ENCODE measurements at regions of chr6 and their contacts with region 1.

Region 1: GRCh38 chr6:142946181-142946923 is 1.4 kb upstream of the HIVEP2 start:
- DNase-seq: no peak
- ATAC-seq: peak; percentile 51
- H3K4me3 ChIP-seq: peak overlapping the region; percentile 94
- H3K27ac ChIP-seq: peak overlapping the region; percentile 98
- H3K4me1 ChIP-seq: peaks cover 9% of the 10 kb centered on the region; the same call in 1 of the 2 replicates
- H3K27me3 ChIP-seq: no peaks in the 10 kb centered on the region
- CTCF ChIP-seq: no peak
- EP300 ChIP-seq: no peak; a peak in 1 of 4 replicates
- POLR2A ChIP-seq: peak; percentile 52; the same call in 1 of the 2 replicates
- RAD21 ChIP-seq: no peak

Region 2: DNA sequence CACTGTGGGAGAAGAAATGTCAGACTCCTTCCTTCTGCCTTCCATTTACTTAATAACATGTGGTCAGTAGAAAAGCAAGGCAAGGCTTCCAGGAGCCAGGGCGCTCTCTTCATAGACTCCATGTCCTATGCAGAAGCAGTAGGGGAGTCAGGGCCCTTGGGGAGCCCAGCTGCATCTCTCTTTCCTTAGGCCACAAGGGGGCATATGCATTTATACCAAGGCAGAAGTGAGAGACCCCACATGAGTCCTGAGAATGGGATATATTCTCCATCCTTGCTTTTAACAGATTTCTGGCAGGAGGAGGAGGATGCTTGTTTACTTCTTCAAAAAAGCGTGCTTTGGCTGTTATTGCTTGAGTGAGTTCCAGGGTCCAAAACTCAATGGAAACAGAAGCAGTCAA is 199.8 kb before region 1 on chr6:
- CTCF ChIA-PET with region 1: interaction called, 7 read pairs
- POLR2A ChIA-PET with region 1: no interaction called
- RAD21 ChIA-PET with region 1: interaction called, 3 read pairs
- SMC1A ChIA-PET with region 1: no interaction called
- in situ Hi-C with region 1: no loop called
- intact Hi-C with region 1: loop called (anchors 2 kb)
- DNase-seq: no peak
- ATAC-seq: peak; percentile 92
- H3K4me3 ChIP-seq: no peak overlapping the region
- H3K27ac ChIP-seq: no peak overlapping the region
- H3K4me1 ChIP-seq: no peaks in the 10 kb centered on the region
- H3K27me3 ChIP-seq: no peaks in the 10 kb centered on the region
- CTCF ChIP-seq: peak; percentile 46 to 60 (median 56); a peak in 5 of 6 replicates
- EP300 ChIP-seq: no peak
- POLR2A ChIP-seq: no peak
- RAD21 ChIP-seq: peak; percentile 67

Region 3: GRCh38 chr6:142902636-142903053 is 43.7 kb before region 1 on chr6:
- CTCF ChIA-PET with region 1: no interaction called
- POLR2A ChIA-PET with region 1: interaction called, 5 read pairs
- RAD21 ChIA-PET with region 1: interaction called, 5 read pairs
- SMC1A ChIA-PET with region 1: interaction called, 8 read pairs
- in situ Hi-C with region 1: no loop called
- intact Hi-C with region 1: loop called (anchors 5 kb)
- DNase-seq: peak; percentile 67
- ATAC-seq: peak; percentile 79
- H3K4me3 ChIP-seq: no peak overlapping the region
- H3K27ac ChIP-seq: peak overlapping the region; percentile 63
- H3K4me1 ChIP-seq: peaks cover 16% of the 10 kb centered on the region; the same call in 1 of the 2 replicates
- H3K27me3 ChIP-seq: no peaks in the 10 kb centered on the region
- CTCF ChIP-seq: no peak
- EP300 ChIP-seq: peak; percentile 53 to 65; a peak in 2 of 4 replicates
- POLR2A ChIP-seq: no peak
- RAD21 ChIP-seq: no peak

Region 4: GRCh38 chr6:142926494-142927270 is 19.7 kb before region 1 on chr6:
- CTCF ChIA-PET with region 1: interaction called, 21 read pairs
- POLR2A ChIA-PET with region 1: interaction called, 27 read pairs
- RAD21 ChIA-PET with region 1: interaction called, 10 read pairs
- SMC1A ChIA-PET with region 1: interaction called, 50 read pairs
- in situ Hi-C with region 1: no loop called
- intact Hi-C with region 1: loop called (anchors 2 kb)
- DNase-seq: no peak
- ATAC-seq: peak; percentile 80
- H3K4me3 ChIP-seq: peak overlapping the region; percentile 88
- H3K27ac ChIP-seq: peak overlapping the region; percentile 97
- H3K4me1 ChIP-seq: peaks cover 8% of the 10 kb centered on the region
- H3K27me3 ChIP-seq: no peaks in the 10 kb centered on the region
- CTCF ChIP-seq: no peak
- EP300 ChIP-seq: peak; percentile 64 to 66; a peak in 2 of 4 replicates
- POLR2A ChIP-seq: peak; percentile 86
- RAD21 ChIP-seq: no peak

Region 5: GRCh38 chr6:143015300-143015706 is 69.0 kb after region 1 on chr6:
- CTCF ChIA-PET with region 1: no interaction called
- POLR2A ChIA-PET with region 1: no interaction called
- RAD21 ChIA-PET with region 1: no interaction called
- SMC1A ChIA-PET with region 1: no interaction called
- in situ Hi-C with region 1: no loop called
- intact Hi-C with region 1: loop called (anchors 2 kb)
- DNase-seq: peak; percentile 32
- ATAC-seq: peak; percentile 86
- H3K4me3 ChIP-seq: no peak overlapping the region
- H3K27ac ChIP-seq: no peak overlapping the region
- H3K4me1 ChIP-seq: 0 out of 2 replicates have a peak, but pooled peaks cover 3% of the 10 kb centered on the region
- H3K27me3 ChIP-seq: no peaks in the 10 kb centered on the region
- CTCF ChIP-seq: no peak; a peak in 1 of 6 replicates
- EP300 ChIP-seq: 0 out of 4 replicates have a peak, but pooled peaks of 1 of the 2 experiments have one; percentile 8
- POLR2A ChIP-seq: no peak
- RAD21 ChIP-seq: peak; percentile 17; the same call in 1 of the 2 replicates

Region 6: GRCh38 chr6:143060354-143060805 is 114.0 kb after region 1 on chr6:
- CTCF ChIA-PET with region 1: no interaction called
- POLR2A ChIA-PET with region 1: interaction called, 3 read pairs
- RAD21 ChIA-PET with region 1: interaction called, 3 read pairs
- SMC1A ChIA-PET with region 1: interaction called, 3 read pairs
- in situ Hi-C with region 1: no loop called
- intact Hi-C with region 1: loop called (anchors 2 kb)
- DNase-seq: peak; percentile 31
- ATAC-seq: peak; percentile 88
- H3K4me3 ChIP-seq: peak overlapping the region; percentile 93
- H3K27ac ChIP-seq: peak overlapping the region; percentile 77
- H3K4me1 ChIP-seq: peaks cover 13% of the 10 kb centered on the region; the same call in 1 of the 2 replicates
- H3K27me3 ChIP-seq: no peaks in the 10 kb centered on the region
- CTCF ChIP-seq: peak in 2 of 3 experiments; percentile 10 to 17; a peak in 1 of 6 replicates
- EP300 ChIP-seq: no peak; a peak in 1 of 4 replicates
- POLR2A ChIP-seq: peak; percentile 78
- RAD21 ChIP-seq: 0 out of 2 replicates have a peak, but pooled peaks have one; percentile 15

Measured in GM12878 (cell line).